Activated CD8-positive, alpha-beta T cell treated with anti-CD3 and anti-CD28 coated beads for 36 hours (primary cell): ENCODE measurements at regions of chr2 and their contacts with region 1.

Region 1: DNA sequence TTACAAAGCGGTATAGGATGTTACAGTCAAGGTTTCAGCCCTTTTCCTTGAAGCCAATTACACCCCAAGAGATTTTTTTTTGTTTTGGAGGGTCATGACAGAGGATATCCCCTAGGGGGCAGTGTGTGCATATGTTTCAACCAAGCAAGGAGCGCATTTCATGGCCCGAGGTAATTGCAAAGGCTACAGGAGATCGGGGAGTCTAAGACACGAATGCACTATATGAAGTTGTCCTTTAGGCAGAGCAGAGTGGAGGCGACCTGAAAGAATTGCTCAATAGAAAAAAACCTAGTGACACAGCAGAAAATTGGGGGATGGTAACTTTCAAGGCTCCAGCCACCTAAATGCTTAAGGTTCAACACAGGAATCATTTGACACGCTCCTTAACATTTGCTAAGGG is 219.8 kb upstream of the PARD3B start:
- DNase-seq: peak; percentile 64
- ATAC-seq: peak; percentile 77
- H3K4me3 Mint-ChIP-seq: no peak overlapping the region
- H3K27ac Mint-ChIP-seq: no peak overlapping the region
- H3K4me1 Mint-ChIP-seq: peaks cover 2% of the 10 kb centered on the region
- H3K27me3 Mint-ChIP-seq: peaks cover 7% of the 10 kb centered on the region
- CTCF ChIP-seq: peak; percentile 90

Region 2: GRCh38 chr2:204260162-204260877 is 65.1 kb before region 1 on chr2:
- CTCF ChIA-PET with region 1: no interaction called
- POLR2A ChIA-PET with region 1: no interaction called
- intact Hi-C with region 1: no loop called
- DNase-seq: peak; percentile 73
- ATAC-seq: peak; percentile 24
- H3K4me3 Mint-ChIP-seq: no peak overlapping the region
- H3K27ac Mint-ChIP-seq: no peak overlapping the region
- H3K4me1 Mint-ChIP-seq: no peaks in the 10 kb centered on the region
- H3K27me3 Mint-ChIP-seq: peaks cover 26% of the 10 kb centered on the region
- CTCF ChIP-seq: peak; percentile 72

Region 3: GRCh38 chr2:204691911-204692510 is 366.5 kb after region 1 on chr2:
- CTCF ChIA-PET with region 1: interaction called, 3 read pairs
- POLR2A ChIA-PET with region 1: no interaction called
- intact Hi-C with region 1: loop called (anchors 5 kb)
- DNase-seq: peak; percentile 52
- ATAC-seq: peak; percentile 56
- H3K4me3 Mint-ChIP-seq: no peak overlapping the region
- H3K27ac Mint-ChIP-seq: no peak overlapping the region
- H3K4me1 Mint-ChIP-seq: no peaks in the 10 kb centered on the region
- H3K27me3 Mint-ChIP-seq: no peaks in the 10 kb centered on the region
- CTCF ChIP-seq: peak; percentile 64